Activated CD4-positive, alpha-beta T cell treated with anti-CD3 and anti-CD28 coated beads, Interleukin-2, amount 10 ng/mL, durations not matched to agents 7 days and 5 days (primary cell): ENCODE measurements at regions of chr14 and their contacts with region 1.

Region 1: GRCh38 chr14:23478111-23478759 is 8.7 kb downstream of the NGDN start:
- DNase-seq: peak; percentile 79
- H3K4me3 Mint-ChIP-seq: no peak overlapping the region
- H3K27ac Mint-ChIP-seq: no peak overlapping the region
- H3K4me1 Mint-ChIP-seq: peaks cover 5% of the 10 kb centered on the region
- H3K27me3 Mint-ChIP-seq: no peaks in the 10 kb centered on the region

Region 2: GRCh38 chr14:23555882-23556699 is 77.9 kb after region 1 on chr14 and contains the start of gene THTPA:
- CTCF ChIA-PET with region 1: interaction called, 96 read pairs
- POLR2A ChIA-PET with region 1: interaction called, 4 read pairs
- DNase-seq: peak; percentile 96
- H3K4me3 Mint-ChIP-seq: peak within 1 kb of the TSS; percentile 90
- H3K27ac Mint-ChIP-seq: peak within 1 kb of the TSS; percentile 96
- H3K4me1 Mint-ChIP-seq: peaks cover 49% of the 10 kb centered on the region
- H3K27me3 Mint-ChIP-seq: no peaks in the 10 kb centered on the region
- total RNA-seq, gene THTPA: 8.1 to 12.7 TPM

Region 3: DNA sequence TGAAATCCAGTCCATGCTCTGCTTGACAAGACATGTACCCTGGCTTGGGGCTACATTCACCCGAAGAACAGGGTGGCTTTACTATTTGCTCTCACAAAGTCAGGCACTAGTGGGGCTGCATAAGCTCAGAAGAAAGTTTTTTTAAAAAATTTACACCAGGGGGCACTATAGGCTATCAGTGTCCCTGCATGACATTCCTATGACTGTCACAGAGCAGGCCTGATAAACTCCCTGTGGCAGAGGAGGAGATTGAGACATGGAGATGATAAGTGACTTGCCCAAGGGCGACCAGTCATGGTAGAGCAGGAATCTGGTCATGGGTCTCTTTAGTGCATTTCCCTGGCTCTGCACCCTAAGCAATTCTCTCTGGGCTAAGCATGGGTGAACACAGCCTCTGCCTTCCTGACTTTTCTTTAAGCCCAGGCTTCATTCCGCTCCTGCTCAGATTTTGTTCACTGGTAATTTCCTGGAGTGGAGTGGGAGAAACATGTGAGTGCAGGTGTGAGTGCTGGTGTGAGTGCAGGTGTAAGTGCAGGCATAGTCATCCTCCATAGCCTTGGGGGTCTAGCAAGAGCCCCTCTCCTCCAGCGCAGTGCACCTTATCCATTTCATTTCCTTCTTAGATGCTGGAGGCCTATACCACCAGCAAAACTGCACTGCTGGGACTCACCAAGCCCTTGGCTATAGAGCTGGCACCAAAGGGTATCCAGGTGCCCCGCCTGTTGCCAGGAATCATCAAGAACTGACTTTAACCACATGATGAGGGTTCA is 249.5 kb after region 1 on chr14:
- CTCF ChIA-PET with region 1: no interaction called
- POLR2A ChIA-PET with region 1: no interaction called
- DNase-seq: no peak
- H3K4me3 Mint-ChIP-seq: no peak overlapping the region
- H3K27ac Mint-ChIP-seq: no peak overlapping the region
- H3K4me1 Mint-ChIP-seq: no peaks in the 10 kb centered on the region
- H3K27me3 Mint-ChIP-seq: peaks cover 3% of the 10 kb centered on the region